ENCODE measurements at regions of chr12 and their contacts with region 1.

Region 1: GRCh38 chr12:56117778-56118687 is at the start of gene ZC3H10:
- DNase-seq: peak; percentile 100
- H3K4me3 ChIP-seq: peak within 1 kb of the TSS; percentile 91
- H3K27ac ChIP-seq: peak within 1 kb of the TSS; percentile 94
- H3K4me1 ChIP-seq: peaks cover 26% of the 10 kb centered on the region
- CTCF ChIP-seq: peak; percentile 64
- total RNA-seq, gene ZC3H10: 11.9 and 12.6 TPM in 2 replicates

Region 2: GRCh38 chr12:55926738-55927587 is 191.1 kb before region 1 on chr12:
- CTCF ChIA-PET with region 1: no interaction called
- POLR2A ChIA-PET with region 1: no interaction called
- intact Hi-C with region 1: loop called (anchors 2 kb)
- DNase-seq: peak; percentile 95
- H3K4me3 ChIP-seq: peak overlapping the region; percentile 82
- H3K27ac ChIP-seq: peak overlapping the region; percentile 99
- H3K4me1 ChIP-seq: peaks cover 51% of the 10 kb centered on the region
- CTCF ChIP-seq: peak; percentile 94

Region 3: DNA sequence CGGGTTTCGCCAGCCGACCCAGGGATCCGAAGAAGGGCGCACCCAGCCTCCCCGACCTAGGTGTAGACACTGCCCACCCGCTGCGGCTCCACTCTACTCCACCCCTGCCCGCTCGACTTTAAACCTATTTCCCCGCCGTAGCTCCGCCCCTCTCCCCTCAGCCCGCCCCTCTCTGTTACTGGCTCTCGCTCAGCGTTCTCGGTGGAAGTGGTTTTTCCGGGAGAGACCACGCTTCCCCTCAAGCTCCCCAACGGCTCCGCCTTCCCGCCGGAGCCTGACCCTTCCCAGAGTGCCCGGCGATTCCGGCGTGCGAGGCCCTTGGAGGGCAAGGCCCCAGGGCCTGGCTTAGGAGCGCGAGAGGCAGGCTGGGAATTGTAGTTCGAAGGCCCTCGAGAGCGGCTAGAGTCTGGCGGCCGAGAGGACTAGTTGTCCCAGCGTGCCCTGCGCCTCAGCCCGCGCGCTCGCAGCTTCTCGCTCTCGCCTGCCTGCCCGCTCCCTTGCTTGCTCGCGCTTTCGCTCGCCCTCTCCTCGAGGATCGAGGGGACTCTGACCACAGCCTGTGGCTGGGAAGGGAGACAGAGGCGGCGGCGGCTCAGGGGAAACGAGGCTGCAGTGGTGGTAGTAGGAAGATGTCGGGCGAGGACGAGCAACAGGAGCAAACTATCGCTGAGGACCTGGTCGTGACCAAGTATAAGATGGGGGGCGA is 13.8 kb before region 1 on chr12 and contains the start of gene PA2G4:
- CTCF ChIA-PET with region 1: interaction called, 4 read pairs
- POLR2A ChIA-PET with region 1: interaction called, 64 read pairs
- intact Hi-C with region 1: loop called (anchors 1 kb)
- DNase-seq: peak; percentile 99
- H3K4me3 ChIP-seq: peak within 1 kb of the TSS; percentile 93
- H3K27ac ChIP-seq: peak within 1 kb of the TSS; percentile 70
- H3K4me1 ChIP-seq: peaks cover 27% of the 10 kb centered on the region
- CTCF ChIP-seq: no peak
- total RNA-seq, gene PA2G4: 358 and 437 TPM in 2 replicates

Region 4: GRCh38 chr12:56152318-56153033 is 34.4 kb after region 1 on chr12 and contains the start of gene MYL6B:
- CTCF ChIA-PET with region 1: no interaction called
- POLR2A ChIA-PET with region 1: interaction called, 3 read pairs
- intact Hi-C with region 1: loop called (anchors 1 kb)
- DNase-seq: peak; percentile 95
- H3K4me3 ChIP-seq: peak within 1 kb of the TSS; percentile 77
- H3K27ac ChIP-seq: peak within 1 kb of the TSS; percentile 87
- H3K4me1 ChIP-seq: peaks cover 36% of the 10 kb centered on the region
- CTCF ChIP-seq: no peak
- total RNA-seq, gene MYL6B: 56.6 and 105 TPM in 2 replicates

Region 5: DNA sequence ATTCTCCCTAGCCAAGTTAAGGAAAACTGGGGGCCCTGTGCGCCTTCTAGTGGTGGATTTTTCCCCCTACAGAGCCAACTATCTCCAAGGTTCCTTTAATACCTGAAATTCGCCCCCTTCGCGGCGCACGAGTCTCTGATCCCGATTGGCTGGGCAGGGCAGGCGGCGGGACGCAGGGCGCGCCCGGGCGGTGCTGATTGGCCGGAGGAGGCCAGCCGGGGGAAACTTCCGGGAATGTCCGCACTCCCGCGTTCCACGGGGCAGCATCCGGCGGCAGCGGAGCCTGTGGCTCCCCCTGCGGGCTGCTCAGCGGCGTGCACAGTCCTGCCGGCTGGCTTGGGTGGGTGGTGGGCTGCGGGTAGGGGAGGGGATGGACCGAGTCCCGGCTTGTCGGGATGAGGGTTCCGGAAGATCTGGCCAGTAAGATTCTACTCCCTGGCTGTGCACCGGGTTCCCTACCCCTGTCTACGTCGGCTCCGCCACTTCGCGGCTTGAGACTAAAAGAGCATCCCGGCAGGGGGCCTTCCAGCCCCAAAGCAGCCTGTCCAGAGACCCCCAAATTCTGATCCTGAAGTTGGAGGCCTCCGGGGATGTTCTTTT is 106.2 kb after region 1 on chr12 and contains the start of gene NABP2:
- CTCF ChIA-PET with region 1: interaction called, 4 read pairs
- POLR2A ChIA-PET with region 1: interaction called, 15 read pairs
- intact Hi-C with region 1: loop called (anchors 1 kb)
- DNase-seq: peak; percentile 98
- H3K4me3 ChIP-seq: peak within 1 kb of the TSS; percentile 83
- H3K27ac ChIP-seq: peak within 1 kb of the TSS; percentile 41
- H3K4me1 ChIP-seq: peaks cover 40% of the 10 kb centered on the region
- CTCF ChIP-seq: peak; percentile 96
- total RNA-seq, gene NABP2: 37.5 and 46.0 TPM in 2 replicates

Region 6: DNA sequence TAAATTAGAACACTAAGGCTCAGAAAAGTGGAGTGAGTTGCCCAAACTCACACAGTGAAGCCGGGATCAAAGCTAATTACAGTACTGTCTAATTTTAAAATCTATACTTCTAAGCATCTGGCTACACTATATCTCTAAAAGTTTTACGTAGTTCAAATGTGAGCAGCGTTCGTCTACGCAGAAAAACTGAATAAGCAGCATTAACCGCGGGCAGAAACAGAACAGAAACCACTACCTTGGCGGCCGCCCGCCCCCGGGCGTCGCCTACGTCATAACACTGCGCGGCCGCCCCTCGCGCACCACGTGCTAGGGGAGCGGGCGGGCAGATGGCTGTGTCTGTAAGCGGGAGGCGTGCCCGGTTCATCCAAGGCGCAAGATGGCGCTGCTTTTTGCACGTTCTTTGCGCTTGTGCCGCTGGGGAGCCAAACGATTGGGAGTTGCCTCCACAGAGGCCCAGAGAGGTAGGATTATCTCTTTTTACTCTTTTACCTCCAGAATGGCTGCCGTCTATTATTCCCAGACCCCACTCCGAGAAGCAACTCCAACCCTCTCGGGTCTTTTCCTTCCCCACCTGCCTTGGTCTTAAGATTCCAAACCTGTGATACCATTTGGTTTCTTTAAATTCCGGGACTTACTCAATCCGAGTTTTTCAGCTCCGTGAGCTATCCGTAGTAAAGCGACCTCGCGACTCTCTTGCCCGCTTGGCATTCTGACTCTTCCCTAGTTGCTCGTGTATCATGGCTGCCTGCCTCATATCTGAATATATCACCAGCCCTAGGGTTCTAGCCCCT is 350.4 kb after region 1 on chr12 and contains the start of gene SPRYD4:
- CTCF ChIA-PET with region 1: no interaction called
- POLR2A ChIA-PET with region 1: no interaction called
- intact Hi-C with region 1: loop called (anchors 2 kb)
- DNase-seq: peak; percentile 97
- H3K4me3 ChIP-seq: peak within 1 kb of the TSS; percentile 89
- H3K27ac ChIP-seq: peak within 1 kb of the TSS; percentile 76
- H3K4me1 ChIP-seq: peaks cover 22% of the 10 kb centered on the region
- CTCF ChIP-seq: peak; percentile 75
- total RNA-seq, gene SPRYD4: 5.3 and 5.9 TPM in 2 replicates